SK-N-SH (cell line): ENCODE measurements at regions of chr15 and their contacts with region 1.

Region 1: DNA sequence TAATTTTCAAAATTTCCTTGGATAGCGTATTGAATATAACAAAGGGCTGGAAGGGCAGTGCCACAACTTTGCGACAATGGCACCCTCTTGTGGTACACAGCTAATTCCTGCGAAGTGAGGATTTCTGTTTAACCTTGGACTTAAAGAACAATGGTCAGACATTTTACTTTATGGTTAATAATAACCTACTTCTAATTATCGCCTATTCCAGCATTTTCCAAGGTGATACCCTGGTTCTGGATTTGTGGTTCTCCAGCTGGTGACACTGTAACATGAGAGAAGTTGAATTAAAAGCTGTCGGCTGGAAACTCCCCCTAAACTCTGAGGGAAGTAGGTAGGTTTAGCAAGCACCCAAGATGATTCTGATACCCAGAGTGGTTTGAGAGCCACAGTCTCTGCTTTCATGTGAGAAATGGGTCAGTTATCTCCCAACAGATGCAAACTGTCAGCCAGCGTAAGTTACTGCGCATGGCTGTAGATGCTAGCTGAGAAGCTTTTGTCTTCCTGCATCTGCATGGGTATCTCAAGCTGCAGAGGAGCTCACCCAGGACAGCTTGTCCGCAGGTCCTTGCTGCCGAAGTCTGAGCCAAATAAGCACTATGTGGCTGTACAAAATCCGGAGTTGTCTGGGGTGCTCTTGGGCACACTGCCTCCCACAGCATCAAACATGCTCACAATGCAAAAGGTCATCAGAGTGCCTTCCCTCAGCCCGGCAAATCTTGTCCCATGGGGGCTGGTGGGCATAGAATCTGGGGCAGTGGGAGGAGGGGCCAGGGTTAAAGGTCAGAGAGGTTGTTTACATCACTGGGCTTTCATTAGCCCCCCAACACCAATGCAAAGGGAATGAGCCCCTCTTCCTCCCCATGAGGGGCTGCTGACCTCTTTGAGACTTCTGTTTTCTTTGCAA is 6.6 kb upstream of the CHSY1 start:
- DNase-seq: peak; percentile 66
- H3K4me3 ChIP-seq: peak overlapping the region in 1 of 2 experiments; percentile 34; a peak in 1 of 4 replicates
- H3K27ac ChIP-seq: no peak overlapping the region
- H3K4me1 ChIP-seq: peaks cover 0 to 8% of the 10 kb centered on the region in 2 experiments; a peak in 1 of 4 replicates
- H3K27me3 ChIP-seq: no peaks in the 10 kb centered on the region
- CTCF ChIP-seq: peak; percentile 98
- EP300 ChIP-seq: 0 out of 4 replicates have a peak, but pooled peaks of 1 of the 2 experiments have one; percentile 14
- RAD21 ChIP-seq: peak; percentile 99

Region 2: DNA sequence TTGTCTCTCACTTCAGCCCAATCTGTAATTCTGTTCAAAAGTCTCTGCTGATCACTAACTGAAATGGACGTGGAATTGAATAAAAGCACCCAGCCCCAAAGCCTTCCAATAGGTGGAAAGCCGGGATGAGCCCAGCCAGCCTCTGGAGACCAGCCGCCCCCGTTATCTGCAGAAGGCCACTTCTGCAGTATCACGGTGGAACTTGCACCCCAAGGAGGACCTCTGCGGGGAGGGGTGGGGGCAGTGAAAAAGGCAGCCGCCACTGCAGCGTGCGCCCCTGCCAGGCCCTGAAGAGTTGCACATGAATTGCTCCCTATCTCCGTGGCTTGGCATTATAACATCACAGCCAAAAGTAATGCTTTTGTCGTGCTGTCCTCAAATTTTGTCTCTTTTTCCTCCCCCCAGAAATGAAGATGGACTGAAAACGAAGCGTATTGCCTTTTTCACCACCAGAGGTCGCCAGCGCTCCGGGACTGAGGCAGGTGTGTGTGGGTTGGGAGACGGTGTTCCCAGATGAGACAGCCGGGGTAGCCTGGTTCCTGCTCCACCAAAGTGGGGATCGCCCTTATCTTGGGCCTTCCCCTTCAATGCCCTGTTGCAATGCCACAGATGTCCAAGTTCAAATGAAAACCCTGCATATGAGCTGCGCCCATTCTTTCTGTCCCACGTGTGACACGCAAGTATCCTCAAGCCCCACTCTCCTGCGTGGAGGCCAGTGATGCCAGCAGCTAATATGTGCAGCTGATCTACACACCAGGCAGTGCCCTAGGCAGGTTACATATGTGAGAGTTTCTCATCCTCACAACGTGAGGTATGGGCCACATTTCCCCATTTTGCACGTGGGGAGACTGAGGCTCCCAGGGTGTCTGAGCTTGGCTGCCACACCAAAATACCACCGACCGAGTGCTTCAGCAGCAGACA is 243.3 kb before region 1 on chr15:
- CTCF ChIA-PET with region 1: interaction called, 87 read pairs
- POLR2A ChIA-PET with region 1: no interaction called
- DNase-seq: peak; percentile 91
- H3K4me3 ChIP-seq: no peak overlapping the region
- H3K27ac ChIP-seq: no peak overlapping the region
- H3K4me1 ChIP-seq: peaks cover 0 to 7% of the 10 kb centered on the region in 2 experiments; a peak in 1 of 4 replicates
- H3K27me3 ChIP-seq: no peaks in the 10 kb centered on the region
- CTCF ChIP-seq: peak; percentile 93
- EP300 ChIP-seq: no peak
- RAD21 ChIP-seq: peak; percentile 96

Region 3: GRCh38 chr15:101121511-101122090 is 136.9 kb before region 1 on chr15:
- CTCF ChIA-PET with region 1: interaction called, 24 read pairs
- POLR2A ChIA-PET with region 1: interaction called, 4 read pairs
- DNase-seq: peak; percentile 91
- H3K4me3 ChIP-seq: no peak overlapping the region; a peak in 1 of 4 replicates
- H3K27ac ChIP-seq: peak overlapping the region; percentile 28 to 98; a peak in 3 of 4 replicates
- H3K4me1 ChIP-seq: peaks cover 10 to 37% of the 10 kb centered on the region in 2 experiments
- H3K27me3 ChIP-seq: no peaks in the 10 kb centered on the region
- CTCF ChIP-seq: peak; percentile 40; the same call in 1 of the 2 replicates
- EP300 ChIP-seq: peak in 1 of 2 experiments; percentile 67; a peak in 2 of 4 replicates
- RAD21 ChIP-seq: peak; percentile 73

Region 4: GRCh38 chr15:101138913-101139880 is 119.3 kb before region 1 on chr15:
- CTCF ChIA-PET with region 1: interaction called, 10 read pairs
- POLR2A ChIA-PET with region 1: no interaction called
- DNase-seq: no peak
- H3K4me3 ChIP-seq: no peak overlapping the region
- H3K27ac ChIP-seq: no peak overlapping the region; a peak in 1 of 4 replicates
- H3K4me1 ChIP-seq: peaks cover 0 to 39% of the 10 kb centered on the region in 2 experiments; a peak in 1 of 4 replicates
- H3K27me3 ChIP-seq: no peaks in the 10 kb centered on the region
- CTCF ChIP-seq: no peak
- EP300 ChIP-seq: no peak
- RAD21 ChIP-seq: no peak

Region 5: DNA sequence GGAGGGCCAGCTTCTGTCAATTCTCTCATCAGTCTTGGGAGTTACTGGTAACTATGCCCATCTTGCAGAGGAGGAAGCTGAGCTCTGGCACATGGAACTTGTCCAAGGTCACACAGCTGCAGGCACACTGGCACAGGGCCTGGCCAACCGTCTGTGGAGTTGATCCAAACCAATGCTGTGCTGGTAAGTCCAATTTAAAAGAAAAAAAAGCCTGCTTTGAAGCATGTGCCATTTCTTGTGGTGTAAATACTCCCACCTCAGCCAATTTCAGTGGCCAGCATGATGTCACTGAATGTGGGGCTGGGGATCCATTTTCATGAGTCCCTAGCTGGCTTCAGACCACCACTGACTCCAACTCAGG is 90.0 kb before region 1 on chr15:
- CTCF ChIA-PET with region 1: no interaction called
- POLR2A ChIA-PET with region 1: no interaction called
- DNase-seq: no peak
- H3K4me3 ChIP-seq: no peak overlapping the region
- H3K27ac ChIP-seq: peak overlapping the region in 1 of 2 experiments; percentile 40; a peak in 2 of 4 replicates
- H3K4me1 ChIP-seq: peaks cover 26 to 47% of the 10 kb centered on the region in 2 experiments; a peak in 3 of 4 replicates
- H3K27me3 ChIP-seq: no peaks in the 10 kb centered on the region
- CTCF ChIP-seq: no peak
- EP300 ChIP-seq: no peak
- RAD21 ChIP-seq: no peak

Region 6: GRCh38 chr15:101277038-101277882 is 18.8 kb after region 1 on chr15 and contains the start of gene SELENOS:
- CTCF ChIA-PET with region 1: interaction called, 12 read pairs
- POLR2A ChIA-PET with region 1: no interaction called
- DNase-seq: peak; percentile 97
- H3K4me3 ChIP-seq: peak within 1 kb of the TSS; percentile 91 to 97
- H3K27ac ChIP-seq: peak within 1 kb of the TSS; percentile 75 to 86
- H3K4me1 ChIP-seq: peaks cover 3 to 32% of the 10 kb centered on the region in 2 experiments; a peak in 2 of 4 replicates
- H3K27me3 ChIP-seq: no peaks in the 10 kb centered on the region
- CTCF ChIP-seq: no peak
- EP300 ChIP-seq: peak in 1 of 2 experiments; percentile 43; a peak in 1 of 4 replicates
- RAD21 ChIP-seq: no peak
- polyA plus RNA-seq, gene SELENOS: 101 and 124 TPM in 2 replicates